Activated CD8-positive, alpha-beta memory T cell treated with anti-CD3 and anti-CD28 coated beads, Interleukin-2, amount 10 ng/mL, durations not matched to agents 7 days and 5 days (primary cell): ENCODE measurements at regions of chr5 and their contacts with region 1.

Region 1: GRCh38 chr5:177403792-177404640 is 3.6 kb upstream of the PFN3 start:
- DNase-seq: peak; percentile 90
- ATAC-seq: peak; percentile 89
- H3K4me3 Mint-ChIP-seq: peak overlapping the region; percentile 64
- H3K27ac Mint-ChIP-seq: peak overlapping the region; percentile 63
- H3K4me1 Mint-ChIP-seq: peaks cover 37% of the 10 kb centered on the region
- H3K27me3 Mint-ChIP-seq: peaks cover 23% of the 10 kb centered on the region

Region 2: DNA sequence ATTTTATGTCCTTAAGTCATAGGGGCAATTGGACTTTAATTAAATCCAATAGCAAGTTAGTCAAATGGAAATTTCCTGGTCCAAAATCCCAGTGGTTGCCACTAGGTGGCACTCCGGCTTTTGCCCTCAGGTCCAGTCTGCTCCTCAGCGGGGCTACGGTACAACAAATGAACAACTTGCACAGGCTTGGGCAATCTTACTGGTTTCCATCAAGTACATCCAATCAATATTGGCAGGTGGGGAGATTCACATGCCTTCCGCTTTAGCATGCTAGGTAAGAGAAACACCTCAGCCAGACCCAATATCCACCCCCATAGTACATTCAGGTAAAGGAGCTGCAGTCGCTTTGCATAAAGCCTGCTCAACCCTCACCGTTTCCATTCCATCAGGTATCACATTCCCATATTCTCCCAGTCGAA is 86.0 kb before region 1 on chr5:
- CTCF ChIA-PET with region 1: interaction called, 60 read pairs
- DNase-seq: peak; percentile 87
- ATAC-seq: peak; percentile 76
- H3K4me3 Mint-ChIP-seq: no peak overlapping the region
- H3K27ac Mint-ChIP-seq: no peak overlapping the region
- H3K4me1 Mint-ChIP-seq: peaks cover 48% of the 10 kb centered on the region
- H3K27me3 Mint-ChIP-seq: no peaks in the 10 kb centered on the region

Region 3: DNA sequence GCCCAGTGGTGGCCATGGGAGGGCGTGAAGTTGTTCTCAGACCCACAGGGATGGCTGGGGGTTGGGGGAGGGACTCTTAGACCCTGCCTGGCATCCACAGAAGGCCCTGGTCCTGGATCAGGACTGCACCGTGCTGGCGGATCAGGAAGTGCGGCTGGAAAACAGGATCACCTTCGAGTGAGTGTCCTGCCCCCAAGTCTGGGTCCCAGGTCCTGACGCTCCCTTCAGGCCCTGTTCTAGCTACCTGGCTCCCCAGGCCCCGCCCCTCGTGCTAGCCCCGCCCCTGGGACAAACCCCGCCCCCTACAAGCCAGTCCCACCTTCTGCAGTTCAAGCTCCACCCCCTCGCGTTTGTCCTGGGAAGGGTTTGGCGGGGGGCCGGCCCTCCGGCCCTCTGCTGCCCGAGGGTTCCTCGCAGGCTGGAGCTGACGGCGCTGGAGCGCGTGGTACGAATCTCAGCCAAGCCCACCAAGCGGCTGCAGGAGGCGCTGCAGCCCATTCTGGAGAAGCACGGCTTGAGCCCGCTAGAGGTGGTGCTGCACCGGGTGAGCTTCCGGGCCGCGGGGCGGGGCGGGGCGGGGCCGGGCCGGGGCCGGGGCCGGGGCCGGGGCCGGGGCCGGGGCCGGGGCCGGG is 33.4 kb before region 1 on chr5:
- CTCF ChIA-PET with region 1: interaction called, 64 read pairs
- DNase-seq: peak; percentile 77
- ATAC-seq: peak; percentile 83
- H3K4me3 Mint-ChIP-seq: peak overlapping the region; percentile 53
- H3K27ac Mint-ChIP-seq: no peak overlapping the region
- H3K4me1 Mint-ChIP-seq: peaks cover 56% of the 10 kb centered on the region
- H3K27me3 Mint-ChIP-seq: no peaks in the 10 kb centered on the region

Region 4: GRCh38 chr5:177425801-177426565 is 22.0 kb after region 1 on chr5:
- CTCF ChIA-PET with region 1: interaction called, 269 read pairs
- DNase-seq: peak; percentile 100
- ATAC-seq: peak; percentile 87
- H3K4me3 Mint-ChIP-seq: peak overlapping the region; percentile 85
- H3K27ac Mint-ChIP-seq: peak overlapping the region; percentile 98
- H3K4me1 Mint-ChIP-seq: peaks cover 45% of the 10 kb centered on the region
- H3K27me3 Mint-ChIP-seq: no peaks in the 10 kb centered on the region

Region 5: GRCh38 chr5:177473461-177474001 is 69.5 kb after region 1 on chr5 and contains the start of gene DBN1:
- CTCF ChIA-PET with region 1: interaction called, 20 read pairs
- DNase-seq: peak; percentile 59
- ATAC-seq: peak; percentile 35
- H3K4me3 Mint-ChIP-seq: peak within 1 kb of the TSS; percentile 77
- H3K27ac Mint-ChIP-seq: peak within 1 kb of the TSS; percentile 84
- H3K4me1 Mint-ChIP-seq: peaks cover 57% of the 10 kb centered on the region
- H3K27me3 Mint-ChIP-seq: no peaks in the 10 kb centered on the region
- total RNA-seq, gene DBN1: 81.5 to 128 TPM